Left ventricle myocardium inferior (tissue), 1 donor: ENCODE measurements at regions of chr1 and their contacts with region 1.

Region 1: DNA sequence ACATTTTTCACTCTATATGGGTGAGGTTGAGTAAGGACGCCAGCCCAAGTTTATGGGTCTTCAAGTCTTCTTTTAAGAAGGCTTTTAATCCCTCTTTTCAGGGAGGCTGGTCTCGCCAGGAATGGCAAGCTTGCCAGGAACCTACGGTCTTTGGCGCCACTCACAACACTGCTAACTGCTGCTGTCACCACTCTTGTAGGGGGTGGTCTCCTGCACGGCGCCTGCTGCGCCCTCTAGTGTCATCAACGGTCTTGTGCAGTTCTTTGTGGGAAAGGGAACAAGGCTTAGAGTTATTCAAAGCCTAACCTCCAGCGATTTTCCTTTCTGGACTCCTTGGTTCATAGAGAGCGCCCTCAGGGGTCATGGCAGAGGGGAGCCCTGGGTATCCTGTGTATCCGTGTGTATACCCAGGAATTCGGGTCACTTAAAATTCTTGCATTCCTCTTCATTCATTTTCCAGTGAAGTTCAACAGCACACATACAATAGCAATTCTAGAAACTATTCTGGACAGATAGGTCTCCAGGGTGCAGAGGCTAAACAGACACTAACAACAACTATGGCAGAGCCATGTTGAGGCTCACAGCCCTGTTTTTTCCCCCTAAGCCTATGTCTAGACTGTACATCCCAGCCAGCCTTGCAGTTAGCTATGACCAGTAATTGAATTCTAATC is 392.8 kb upstream of the CAMK1G start:
- DNase-seq: no peak
- H3K4me3 ChIP-seq: no peak overlapping the region
- H3K27ac ChIP-seq: no peak overlapping the region
- H3K4me1 ChIP-seq: no peaks in the 10 kb centered on the region
- H3K27me3 ChIP-seq: peaks cover 12% of the 10 kb centered on the region
- CTCF ChIP-seq: peak; percentile 69

Region 2: GRCh38 chr1:208652296-208653160 is 538.2 kb before region 1 on chr1:
- intact Hi-C with region 1: loop called (anchors 10 kb)
- DNase-seq: peak; percentile 20
- H3K4me3 ChIP-seq: no peak overlapping the region
- H3K27ac ChIP-seq: no peak overlapping the region
- H3K4me1 ChIP-seq: no peaks in the 10 kb centered on the region
- H3K27me3 ChIP-seq: peaks cover 38% of the 10 kb centered on the region
- CTCF ChIP-seq: peak; percentile 96

Region 3: GRCh38 chr1:209150114-209150513 is 40.6 kb before region 1 on chr1:
- intact Hi-C with region 1: no loop called
- DNase-seq: no peak
- H3K4me3 ChIP-seq: no peak overlapping the region
- H3K27ac ChIP-seq: no peak overlapping the region
- H3K4me1 ChIP-seq: no peaks in the 10 kb centered on the region
- H3K27me3 ChIP-seq: no peaks in the 10 kb centered on the region
- CTCF ChIP-seq: no peak